Caco-2 (cell line): ENCODE measurements at regions of chr5 and their contacts with region 1.

Region 1: DNA sequence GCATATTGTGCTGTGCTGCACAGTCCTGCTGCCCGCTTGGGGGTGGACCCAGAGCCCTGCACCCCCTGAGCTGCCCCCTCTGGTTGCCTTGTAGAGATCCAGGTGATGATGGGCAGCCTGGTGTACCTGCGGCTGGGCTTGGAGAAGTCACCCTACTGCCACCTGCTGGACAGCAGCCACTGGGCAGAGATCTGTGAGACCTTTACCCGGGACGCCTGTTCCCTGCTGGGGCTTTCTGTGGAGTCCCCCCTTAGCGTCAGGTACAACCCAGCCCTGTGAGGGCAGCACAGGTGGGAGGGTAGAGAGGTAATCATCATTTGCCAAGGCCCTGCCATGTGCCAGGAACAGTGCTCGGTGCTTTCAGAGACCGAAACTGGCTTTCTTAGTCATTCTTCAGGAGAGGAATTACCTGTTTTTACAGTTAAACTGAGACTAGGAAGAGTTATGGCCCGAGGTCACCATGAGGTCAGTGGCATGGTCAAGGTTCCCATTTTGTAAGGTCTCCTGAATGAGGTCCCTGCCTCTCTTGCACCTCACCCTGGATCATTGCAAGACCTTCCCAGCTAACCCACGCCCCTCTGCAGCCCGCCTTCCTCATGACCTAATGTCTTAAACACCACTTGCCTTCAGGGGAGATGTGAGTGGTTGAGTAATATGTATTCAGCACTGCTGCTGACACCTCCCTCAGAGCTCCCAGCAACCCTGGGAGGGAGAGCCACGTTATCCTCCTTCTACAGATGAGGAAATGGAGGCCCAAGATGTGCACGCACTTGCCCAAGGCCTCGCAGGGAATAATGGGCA is 7.5 kb downstream of the NHP2 start:
- DNase-seq: peak; percentile 86
- H3K4me3 ChIP-seq: no peak overlapping the region
- H3K4me3 Mint-ChIP-seq: no peak overlapping the region
- H3K27ac Mint-ChIP-seq: no peak overlapping the region
- H3K4me1 ChIP-seq: peaks cover 3% of the 10 kb centered on the region; the same call in 1 of the 2 replicates
- H3K4me1 Mint-ChIP-seq: no peaks in the 10 kb centered on the region
- H3K27me3 ChIP-seq: no peaks in the 10 kb centered on the region
- H3K27me3 Mint-ChIP-seq: no peaks in the 10 kb centered on the region
- CTCF ChIP-seq: peak; percentile 80 to 95

Region 2: DNA sequence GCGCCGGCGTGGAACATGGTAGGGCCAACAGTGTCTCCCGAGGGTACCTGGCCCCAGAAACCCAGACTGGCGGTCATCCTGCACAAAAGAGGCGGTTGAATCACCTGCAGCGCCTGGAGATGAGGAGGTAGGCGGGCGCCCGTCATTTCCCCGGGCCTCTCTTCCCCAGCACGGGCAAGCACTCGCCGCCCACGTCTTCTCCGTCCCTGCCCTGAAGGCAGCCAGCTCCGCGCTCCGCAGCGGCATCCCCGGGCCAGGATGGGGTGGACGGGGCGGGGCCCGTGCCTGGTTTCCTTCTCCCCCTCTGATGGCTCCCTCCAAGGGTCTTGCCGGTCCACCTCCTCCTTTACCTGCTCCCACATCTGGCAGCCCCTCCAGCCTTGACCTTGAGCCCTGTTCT is 59.9 kb before region 1 on chr5:
- CTCF ChIA-PET with region 1: no interaction called
- POLR2A ChIA-PET with region 1: no interaction called
- intact Hi-C with region 1: no loop called
- DNase-seq: no peak
- H3K4me3 ChIP-seq: no peak overlapping the region
- H3K4me3 Mint-ChIP-seq: no peak overlapping the region
- H3K27ac Mint-ChIP-seq: no peak overlapping the region
- H3K4me1 ChIP-seq: no peaks in the 10 kb centered on the region
- H3K4me1 Mint-ChIP-seq: no peaks in the 10 kb centered on the region
- H3K27me3 ChIP-seq: no peaks in the 10 kb centered on the region; the same call in 1 of the 2 replicates
- H3K27me3 Mint-ChIP-seq: peaks cover 6% of the 10 kb centered on the region
- CTCF ChIP-seq: no peak

Region 3: GRCh38 chr5:178120868-178121357 is 25.3 kb before region 1 on chr5:
- CTCF ChIA-PET with region 1: interaction called, 8 read pairs
- POLR2A ChIA-PET with region 1: no interaction called
- intact Hi-C with region 1: loop called (anchors 1 kb)
- DNase-seq: peak; percentile 56 to 57
- H3K4me3 ChIP-seq: no peak overlapping the region
- H3K4me3 Mint-ChIP-seq: no peak overlapping the region
- H3K27ac Mint-ChIP-seq: no peak overlapping the region
- H3K4me1 ChIP-seq: peaks cover 12% of the 10 kb centered on the region
- H3K4me1 Mint-ChIP-seq: no peaks in the 10 kb centered on the region
- H3K27me3 ChIP-seq: no peaks in the 10 kb centered on the region
- H3K27me3 Mint-ChIP-seq: no peaks in the 10 kb centered on the region
- CTCF ChIP-seq: peak; percentile 24 to 47

Region 4: DNA sequence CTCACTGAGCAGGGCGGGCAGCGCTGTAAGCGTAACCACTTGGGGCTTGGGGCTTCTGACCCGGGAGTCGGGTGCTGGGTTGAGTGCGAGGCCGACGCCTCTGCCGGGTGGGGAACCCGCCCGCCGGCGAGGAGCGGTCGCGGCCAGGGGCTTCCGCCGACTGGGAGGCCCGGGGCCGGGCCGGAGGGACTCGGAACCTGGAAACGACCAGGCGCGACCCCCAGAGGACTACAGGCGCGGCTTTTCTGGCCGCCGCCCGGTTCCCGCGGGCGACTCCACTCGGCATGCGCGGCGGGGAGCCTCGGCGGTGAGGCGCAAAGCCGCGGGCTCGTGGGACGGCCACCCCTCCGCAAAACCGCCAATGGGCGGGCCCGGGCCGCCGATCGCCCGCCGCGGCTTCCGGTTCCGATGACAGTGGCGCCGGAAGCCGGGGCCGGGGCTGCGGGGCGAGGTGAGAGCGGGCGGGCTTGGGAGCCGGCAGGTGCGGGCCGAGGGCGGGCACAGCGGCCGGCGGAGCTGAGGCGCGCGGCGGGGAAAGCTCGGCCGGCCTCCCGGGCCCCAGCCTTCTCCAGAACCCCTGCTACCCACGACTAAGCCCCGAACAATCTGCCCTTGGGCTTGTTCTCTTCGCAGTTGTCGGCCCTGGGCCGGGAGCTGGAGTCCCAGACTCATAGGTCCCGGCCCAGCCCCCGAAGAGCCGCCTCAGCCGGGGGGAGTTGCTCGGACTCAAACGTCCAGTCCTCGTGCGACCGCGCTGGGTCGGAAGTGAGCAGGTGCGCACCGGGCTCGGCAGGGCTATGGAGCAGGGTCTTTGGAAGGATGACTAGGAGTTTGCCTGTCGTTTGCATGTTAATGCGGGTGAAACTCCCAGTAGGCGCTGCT is 15.4 kb before region 1 on chr5 and contains the start of gene RMND5B:
- CTCF ChIA-PET with region 1: no interaction called
- POLR2A ChIA-PET with region 1: no interaction called
- intact Hi-C with region 1: loop called (anchors 2 kb)
- DNase-seq: peak; percentile 89 to 93
- H3K4me3 ChIP-seq: peak within 1 kb of the TSS; percentile 94
- H3K4me3 Mint-ChIP-seq: peak within 1 kb of the TSS; percentile 75
- H3K27ac Mint-ChIP-seq: peak within 1 kb of the TSS; percentile 72
- H3K4me1 ChIP-seq: peaks cover 6% of the 10 kb centered on the region; the same call in 1 of the 2 replicates
- H3K4me1 Mint-ChIP-seq: peaks cover 8% of the 10 kb centered on the region
- H3K27me3 ChIP-seq: no peaks in the 10 kb centered on the region
- H3K27me3 Mint-ChIP-seq: no peaks in the 10 kb centered on the region
- CTCF ChIP-seq: no peak
- total RNA-seq, gene RMND5B: 45.6 and 48.4 TPM in 2 replicates

Region 5: DNA sequence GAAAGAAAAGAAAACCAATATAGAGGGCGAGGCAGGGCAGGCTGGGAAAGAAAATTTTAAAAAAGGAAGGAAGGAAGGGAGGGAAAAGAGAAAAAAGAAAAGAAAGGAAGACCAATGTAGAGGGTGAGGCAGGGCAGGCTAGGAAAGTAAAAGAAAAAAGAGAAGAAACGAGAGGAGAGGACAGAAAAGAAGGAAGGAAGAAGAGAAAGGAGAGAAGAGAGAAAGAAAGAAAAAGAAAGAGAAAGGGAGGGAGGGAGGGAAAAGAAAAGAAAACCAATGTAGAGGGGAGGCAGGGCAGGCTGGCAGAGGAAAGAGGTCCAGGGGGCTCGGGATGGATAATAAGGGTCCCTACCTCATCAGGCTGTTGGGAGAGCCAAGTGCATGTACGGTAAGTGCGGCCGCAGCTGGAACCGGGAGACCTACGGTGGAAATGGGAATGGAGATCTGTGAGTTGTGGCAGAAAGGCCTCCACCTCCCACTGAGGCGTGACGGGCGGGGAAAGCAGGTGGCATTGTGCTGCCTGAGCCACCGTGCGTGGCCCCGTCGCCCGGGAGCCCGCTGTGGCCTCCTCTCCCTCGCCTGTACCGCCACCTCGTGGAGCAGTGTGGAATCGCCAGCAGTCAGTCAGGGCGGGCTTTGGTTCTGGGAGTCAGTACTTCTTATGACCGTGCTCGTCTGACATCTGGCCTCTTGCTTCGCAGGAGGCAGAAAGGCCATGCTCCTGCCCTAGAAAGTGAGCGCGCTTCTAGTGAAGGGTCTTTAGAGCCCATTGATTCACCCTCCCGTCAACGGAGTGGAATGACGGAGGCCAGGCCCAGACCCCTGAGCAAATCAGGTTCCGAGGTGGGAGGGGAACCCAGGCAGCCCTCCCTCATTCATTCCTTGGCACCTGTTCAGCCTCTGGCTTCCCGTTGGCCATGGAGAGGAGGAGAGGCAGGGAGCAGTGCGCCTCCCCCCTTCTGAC is 17.8 kb after region 1 on chr5:
- CTCF ChIA-PET with region 1: no interaction called
- POLR2A ChIA-PET with region 1: no interaction called
- intact Hi-C with region 1: loop called (anchors 2 kb)
- DNase-seq: peak; percentile 84 to 92
- H3K4me3 ChIP-seq: no peak overlapping the region
- H3K4me3 Mint-ChIP-seq: peak overlapping the region; percentile 24
- H3K27ac Mint-ChIP-seq: no peak overlapping the region
- H3K4me1 ChIP-seq: 0 out of 2 replicates have a peak, but pooled peaks cover 4% of the 10 kb centered on the region
- H3K4me1 Mint-ChIP-seq: peaks cover 7% of the 10 kb centered on the region
- H3K27me3 ChIP-seq: no peaks in the 10 kb centered on the region; the same call in 1 of the 2 replicates
- H3K27me3 Mint-ChIP-seq: peaks cover 14% of the 10 kb centered on the region
- CTCF ChIP-seq: peak; percentile 96 to 98

Region 6: GRCh38 chr5:178182158-178182876 is 36.1 kb after region 1 on chr5:
- CTCF ChIA-PET with region 1: no interaction called
- POLR2A ChIA-PET with region 1: interaction called, 11 read pairs
- intact Hi-C with region 1: no loop called
- DNase-seq: peak in 1 of 2 experiments; percentile 11
- H3K4me3 ChIP-seq: no peak overlapping the region
- H3K4me3 Mint-ChIP-seq: no peak overlapping the region
- H3K27ac Mint-ChIP-seq: peak overlapping the region; percentile 35
- H3K4me1 ChIP-seq: no peaks in the 10 kb centered on the region
- H3K4me1 Mint-ChIP-seq: peaks cover 10% of the 10 kb centered on the region
- H3K27me3 ChIP-seq: no peaks in the 10 kb centered on the region
- H3K27me3 Mint-ChIP-seq: no peaks in the 10 kb centered on the region
- CTCF ChIP-seq: no peak